Gastrocnemius medialis (tissue), 4 donors: ENCODE measurements at regions of chr1 and their contacts with region 1.

Region 1: DNA sequence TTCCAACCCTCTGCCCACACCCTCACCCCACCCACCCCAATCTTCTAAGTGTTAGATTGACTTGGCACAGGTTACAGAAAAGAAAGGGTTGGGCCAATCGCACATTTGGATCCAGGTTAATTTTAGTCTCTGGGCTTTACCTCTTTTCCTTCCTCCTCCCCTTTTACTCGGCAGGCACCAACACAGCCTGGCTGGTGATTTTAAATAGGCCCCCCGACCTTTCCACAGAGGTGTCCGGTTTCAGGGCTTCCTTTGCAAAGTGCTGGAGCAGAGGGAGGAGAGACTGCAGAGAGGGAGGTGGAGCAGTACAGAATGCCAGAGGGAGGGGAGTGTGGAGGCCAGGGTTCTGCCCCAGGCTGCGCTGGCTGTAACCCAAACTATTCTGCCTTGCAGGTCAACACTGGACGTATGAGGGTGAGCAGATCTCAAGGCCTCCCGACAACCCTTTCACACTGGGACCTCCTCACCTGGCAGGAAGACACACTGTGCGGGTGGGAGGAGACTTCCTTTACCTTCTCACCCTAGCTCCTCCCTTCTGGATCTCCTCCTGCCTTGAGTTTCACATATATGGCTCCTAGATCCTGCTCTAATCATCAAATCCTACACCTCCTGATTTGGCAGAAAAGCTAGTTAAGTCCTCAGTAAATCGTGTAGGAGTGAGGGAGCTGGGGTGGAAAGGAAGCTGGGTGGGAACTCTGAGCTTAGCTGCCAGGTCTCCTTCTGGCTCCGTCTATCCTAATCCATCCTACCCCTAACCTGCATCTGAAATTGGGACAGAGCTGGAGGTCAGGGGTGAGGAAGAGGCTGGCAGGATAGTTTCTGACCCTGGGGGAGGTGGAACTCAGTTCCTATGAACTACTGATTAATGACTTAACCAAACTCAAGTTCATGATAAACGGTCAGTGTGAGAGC is 2.4 kb downstream of the CA14 start:
- DNase-seq: peak in 1 of 2 donors; percentile 24
- ATAC-seq: peak in 1 of 2 donors; percentile 5
- H3K4me3 ChIP-seq: peak overlapping the region in 1 of 4 donors; percentile 5
- H3K27ac ChIP-seq: peak overlapping the region; percentile 22 to 76 (median 66)
- H3K4me1 ChIP-seq: peaks cover 32 to 48% of the 10 kb centered on the region in 2 donors
- H3K27me3 ChIP-seq: no peaks in the 10 kb centered on the region
- CTCF ChIP-seq: no peak
- POLR2A ChIP-seq: no peak

Region 2: DNA sequence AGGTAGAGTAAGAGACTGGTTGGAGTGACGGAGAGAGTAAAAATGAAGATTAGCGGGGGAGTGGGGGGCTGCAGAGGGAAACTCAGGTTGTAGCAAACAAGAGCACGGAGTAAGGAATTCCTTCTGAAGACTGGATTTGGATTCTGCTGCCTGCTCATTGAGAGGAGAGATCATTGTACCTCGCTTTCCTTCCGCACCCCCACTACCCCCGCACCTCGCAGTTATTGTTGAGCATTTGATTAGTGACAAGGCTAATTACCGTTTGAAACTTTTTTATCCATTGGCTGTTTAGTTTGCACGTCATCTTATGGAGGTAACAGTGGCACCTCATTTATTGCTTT is 61.8 kb after region 1 on chr1:
- in situ Hi-C with region 1: no loop called
- intact Hi-C with region 1: loop called (anchors 2 kb)
- DNase-seq: no peak
- ATAC-seq: no peak
- H3K4me3 ChIP-seq: peak overlapping the region; percentile 58 to 98 (median 74)
- H3K27ac ChIP-seq: peak overlapping the region; percentile 82 to 88 (median 87)
- H3K4me1 ChIP-seq: peaks cover 9 to 10% of the 10 kb centered on the region in 2 donors
- H3K27me3 ChIP-seq: no peaks in the 10 kb centered on the region
- CTCF ChIP-seq: no peak
- POLR2A ChIP-seq: no peak